ENCODE measurements at regions of chr18 and their contacts with region 1.

Region 1: GRCh38 chr18:49431165-49431962 is 29.1 kb downstream of the DYM start:
- DNase-seq: no peak
- H3K4me3 ChIP-seq: no peak overlapping the region
- H3K27ac ChIP-seq: no peak overlapping the region
- H3K4me1 ChIP-seq: no peaks in the 10 kb centered on the region
- CTCF ChIP-seq: no peak

Region 2: GRCh38 chr18:47870605-47871004 is 1560.8 kb before region 1 on chr18:
- CTCF ChIA-PET with region 1: no interaction called
- POLR2A ChIA-PET with region 1: interaction called, 10 read pairs
- intact Hi-C with region 1: no loop called
- DNase-seq: no peak
- H3K4me3 ChIP-seq: no peak overlapping the region
- H3K27ac ChIP-seq: no peak overlapping the region
- H3K4me1 ChIP-seq: no peaks in the 10 kb centered on the region
- CTCF ChIP-seq: peak; percentile 39; the same call in 1 of the 2 replicates

Measured in OCI-LY7 (cell line).